Heart right ventricle (tissue), 16 donors: ENCODE measurements at regions of chr2 and their contacts with region 1.

Region 1: DNA sequence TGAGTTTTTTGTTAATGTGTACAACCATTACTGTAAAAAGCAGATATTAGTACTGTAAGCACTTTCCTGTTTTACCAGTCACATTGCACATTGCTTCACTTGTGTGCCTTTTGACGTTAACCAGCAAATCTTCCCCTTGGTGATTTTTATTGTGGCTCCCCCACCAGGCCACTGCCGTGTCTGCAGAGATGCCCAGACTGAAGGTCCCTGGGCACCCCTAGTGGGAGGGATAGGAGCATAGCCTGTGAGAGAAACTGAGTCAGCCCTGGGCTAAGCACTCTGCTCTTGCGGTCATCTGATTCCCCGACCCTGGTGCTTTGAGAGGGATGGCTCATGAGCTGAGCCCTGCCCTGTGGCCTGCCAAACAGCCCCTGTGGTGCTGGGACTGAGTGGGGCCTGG is 73.4 kb downstream of the INPP4A start:
- DNase-seq: peak; percentile 34 to 36
- ATAC-seq: peak in 7 of 8 donors; percentile 34 to 65 (median 53)
- H3K4me3 ChIP-seq: no peak overlapping the region
- H3K27ac ChIP-seq: peak overlapping the region in 1 of 10 donors; percentile 49
- H3K4me1 ChIP-seq: peaks cover 5 to 61% (median 18%) of the 10 kb centered on the region in 9 donors
- H3K27me3 ChIP-seq: no peaks in the 10 kb centered on the region
- CTCF ChIP-seq: peak in 8 of 9 donors; percentile 24 to 65 (median 55)

Region 2: DNA sequence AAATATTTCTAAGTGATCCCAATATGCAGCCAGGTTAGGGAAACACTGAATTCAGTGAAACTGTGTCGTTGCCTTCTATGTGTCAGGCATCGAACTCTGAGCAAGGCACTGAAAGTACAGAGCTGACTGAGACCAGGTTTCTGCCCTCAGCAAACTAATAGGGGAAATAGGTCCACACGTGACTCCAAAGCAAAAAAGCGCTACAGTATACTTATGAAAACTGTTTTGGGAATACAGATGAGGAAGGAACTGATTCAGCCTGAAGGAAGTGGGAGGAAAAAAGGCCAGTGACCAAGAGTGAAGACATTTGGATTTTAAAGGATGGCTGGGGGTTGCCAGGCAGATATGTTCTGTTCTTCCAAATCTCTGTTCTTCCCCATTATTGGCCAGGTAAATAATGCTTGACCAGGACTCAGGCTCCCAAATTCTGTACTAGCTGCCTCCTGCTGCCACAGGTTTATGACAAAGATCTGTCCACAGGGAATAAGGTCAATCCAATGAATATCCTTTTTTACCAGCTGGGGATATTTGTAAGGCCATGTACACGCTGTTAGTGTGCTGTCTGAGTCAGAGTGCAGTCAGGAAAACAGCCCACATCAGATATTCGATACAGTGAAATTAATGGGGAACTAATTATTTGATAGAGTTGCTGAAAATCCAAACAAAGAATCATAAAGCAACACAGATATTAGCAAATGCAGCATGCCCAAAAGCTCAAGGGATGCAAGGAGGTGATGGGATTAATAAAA is 97.9 kb before region 1 on chr2:
- intact Hi-C with region 1: loop called in 3 of 10 experiments (anchors 5 to 10 kb)
- DNase-seq: no peak
- ATAC-seq: peak in 5 of 8 donors; percentile 22 to 87 (median 35)
- H3K4me3 ChIP-seq: no peak overlapping the region
- H3K27ac ChIP-seq: peak overlapping the region in 3 of 10 donors; percentile 37 to 58 (median 47)
- H3K4me1 ChIP-seq: peaks cover 0 to 16% (median 4%) of the 10 kb centered on the region in 9 donors
- H3K27me3 ChIP-seq: no peaks in the 10 kb centered on the region
- CTCF ChIP-seq: no peak

Region 3: GRCh38 chr2:98505311-98505808 is 12.7 kb before region 1 on chr2:
- intact Hi-C with region 1: no loop called
- DNase-seq: no peak
- ATAC-seq: peak in 5 of 8 donors; percentile 12 to 41 (median 30)
- H3K4me3 ChIP-seq: no peak overlapping the region
- H3K27ac ChIP-seq: peak overlapping the region in 7 of 10 donors; percentile 25 to 85 (median 64)
- H3K4me1 ChIP-seq: peaks cover 21 to 86% (median 76%) of the 10 kb centered on the region in 9 donors
- H3K27me3 ChIP-seq: no peaks in the 10 kb centered on the region
- CTCF ChIP-seq: no peak

Region 4: DNA sequence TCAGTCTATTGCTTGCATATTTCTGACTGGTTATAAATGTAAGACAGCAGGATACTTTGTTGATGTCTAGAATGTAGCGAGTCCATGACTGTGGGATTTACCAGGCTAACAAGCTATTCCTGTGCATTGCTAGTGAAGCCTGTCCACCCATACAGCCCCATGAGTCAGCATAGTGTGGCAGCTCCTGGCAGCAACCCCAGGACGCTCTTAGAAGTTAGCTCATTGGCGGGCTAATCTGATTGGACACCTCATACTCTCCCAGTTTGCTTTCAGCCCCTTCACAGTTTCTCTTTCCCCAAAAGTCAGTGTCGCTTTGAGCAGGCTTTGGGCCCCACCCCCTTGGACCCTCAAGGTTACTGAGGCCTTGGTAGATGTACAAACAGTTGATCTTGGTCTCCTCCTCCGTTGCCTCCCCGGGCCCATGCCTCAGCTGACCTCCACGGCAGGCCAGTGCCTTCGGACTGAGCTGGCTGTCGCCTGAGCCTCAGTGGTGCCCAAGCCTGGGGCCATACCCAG is 42.2 kb after region 1 on chr2:
- intact Hi-C with region 1: loop called in 1 of 10 experiments (anchors 5 kb)
- DNase-seq: peak; percentile 51 to 73
- ATAC-seq: peak; percentile 66 to 94 (median 84)
- H3K4me3 ChIP-seq: no peak overlapping the region
- H3K27ac ChIP-seq: peak overlapping the region; percentile 34 to 89 (median 67)
- H3K4me1 ChIP-seq: peaks cover 16 to 86% (median 52%) of the 10 kb centered on the region in 9 donors
- H3K27me3 ChIP-seq: no peaks in the 10 kb centered on the region
- CTCF ChIP-seq: no peak